Activated B cell treated with CpG ODN at 0.5 μM for 24 hours (primary cell): ENCODE measurements at regions of chr14 and their contacts with region 1.

Region 1: GRCh38 chr14:23095196-23096108 is at the start of gene C14orf119:
- DNase-seq: peak; percentile 77
- ATAC-seq: peak; percentile 87
- H3K4me3 Mint-ChIP-seq: no peak within 1 kb of the TSS
- H3K27ac Mint-ChIP-seq: no peak within 1 kb of the TSS
- H3K4me1 Mint-ChIP-seq: peaks cover 34% of the 10 kb centered on the region
- H3K27me3 Mint-ChIP-seq: no peaks in the 10 kb centered on the region
- CTCF ChIP-seq: no peak
- total RNA-seq, gene C14orf119: 35.3 and 36.0 TPM in 2 replicates

Region 2: DNA sequence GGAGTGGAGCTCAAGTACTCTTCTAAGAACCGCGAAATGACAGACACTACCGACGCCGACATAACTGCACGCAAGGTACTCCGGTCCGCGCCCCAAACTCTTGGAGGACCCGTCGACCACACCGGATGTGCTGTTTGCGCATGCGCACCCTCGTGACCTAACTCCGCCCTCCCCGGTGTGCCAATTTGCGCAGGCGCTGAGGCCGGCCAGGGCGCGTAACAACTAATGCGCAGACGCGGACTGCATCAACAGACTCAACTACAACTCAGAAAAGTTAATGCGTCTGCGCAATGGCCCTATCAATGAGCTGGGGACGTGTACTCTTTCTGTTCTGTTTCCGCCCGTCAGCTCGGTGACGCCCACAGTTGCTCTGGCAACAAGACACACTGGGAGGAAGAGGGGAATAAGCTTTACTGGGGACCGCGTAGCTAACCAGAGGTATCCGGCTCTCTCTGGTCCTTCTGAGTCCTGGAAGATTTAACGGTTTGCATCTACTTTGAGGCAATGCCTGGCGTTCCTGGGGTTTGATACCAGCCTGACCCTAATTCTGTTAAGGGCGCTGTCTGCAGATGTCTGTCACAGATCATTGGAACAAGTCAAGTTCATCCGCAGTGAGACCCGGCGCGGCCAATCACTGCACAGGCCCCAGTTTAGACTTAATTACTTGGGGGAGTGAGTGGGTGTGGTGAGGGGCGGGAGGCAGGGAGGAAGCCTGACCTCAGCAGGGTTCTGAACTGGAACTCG is 506.2 kb before region 1 on chr14 and contains the start of gene DAD1:
- CTCF ChIA-PET with region 1: no interaction called
- POLR2A ChIA-PET with region 1: interaction called, 10 read pairs
- intact Hi-C with region 1: loop called (anchors 1 kb)
- DNase-seq: peak; percentile 99
- ATAC-seq: peak; percentile 88
- H3K4me3 Mint-ChIP-seq: peak within 1 kb of the TSS; percentile 99
- H3K27ac Mint-ChIP-seq: peak within 1 kb of the TSS; percentile 100
- H3K4me1 Mint-ChIP-seq: peaks cover 57% of the 10 kb centered on the region
- H3K27me3 Mint-ChIP-seq: peaks cover 2% of the 10 kb centered on the region
- CTCF ChIP-seq: no peak
- total RNA-seq, gene DAD1: 123 and 139 TPM in 2 replicates

Region 3: GRCh38 chr14:23034483-23035302 is 60.8 kb before region 1 on chr14 and contains the start of gene PSMB5:
- CTCF ChIA-PET with region 1: no interaction called
- POLR2A ChIA-PET with region 1: interaction called, 4 read pairs
- intact Hi-C with region 1: loop called (anchors 1 kb)
- DNase-seq: peak; percentile 67
- ATAC-seq: peak; percentile 93
- H3K4me3 Mint-ChIP-seq: peak within 1 kb of the TSS; percentile 84
- H3K27ac Mint-ChIP-seq: peak within 1 kb of the TSS; percentile 96
- H3K4me1 Mint-ChIP-seq: peaks cover 29% of the 10 kb centered on the region
- H3K27me3 Mint-ChIP-seq: no peaks in the 10 kb centered on the region
- CTCF ChIP-seq: no peak
- total RNA-seq, gene PSMB5: 53.3 and 67.5 TPM in 2 replicates

Region 4: GRCh38 chr14:23076785-23077408 is 18.6 kb before region 1 on chr14:
- CTCF ChIA-PET with region 1: interaction called, 24 read pairs
- POLR2A ChIA-PET with region 1: interaction called, 36 read pairs
- intact Hi-C with region 1: no loop called
- DNase-seq: no peak
- ATAC-seq: peak; percentile 67
- H3K4me3 Mint-ChIP-seq: no peak overlapping the region
- H3K27ac Mint-ChIP-seq: no peak overlapping the region
- H3K4me1 Mint-ChIP-seq: peaks cover 7% of the 10 kb centered on the region
- H3K27me3 Mint-ChIP-seq: no peaks in the 10 kb centered on the region
- CTCF ChIP-seq: no peak

Region 5: DNA sequence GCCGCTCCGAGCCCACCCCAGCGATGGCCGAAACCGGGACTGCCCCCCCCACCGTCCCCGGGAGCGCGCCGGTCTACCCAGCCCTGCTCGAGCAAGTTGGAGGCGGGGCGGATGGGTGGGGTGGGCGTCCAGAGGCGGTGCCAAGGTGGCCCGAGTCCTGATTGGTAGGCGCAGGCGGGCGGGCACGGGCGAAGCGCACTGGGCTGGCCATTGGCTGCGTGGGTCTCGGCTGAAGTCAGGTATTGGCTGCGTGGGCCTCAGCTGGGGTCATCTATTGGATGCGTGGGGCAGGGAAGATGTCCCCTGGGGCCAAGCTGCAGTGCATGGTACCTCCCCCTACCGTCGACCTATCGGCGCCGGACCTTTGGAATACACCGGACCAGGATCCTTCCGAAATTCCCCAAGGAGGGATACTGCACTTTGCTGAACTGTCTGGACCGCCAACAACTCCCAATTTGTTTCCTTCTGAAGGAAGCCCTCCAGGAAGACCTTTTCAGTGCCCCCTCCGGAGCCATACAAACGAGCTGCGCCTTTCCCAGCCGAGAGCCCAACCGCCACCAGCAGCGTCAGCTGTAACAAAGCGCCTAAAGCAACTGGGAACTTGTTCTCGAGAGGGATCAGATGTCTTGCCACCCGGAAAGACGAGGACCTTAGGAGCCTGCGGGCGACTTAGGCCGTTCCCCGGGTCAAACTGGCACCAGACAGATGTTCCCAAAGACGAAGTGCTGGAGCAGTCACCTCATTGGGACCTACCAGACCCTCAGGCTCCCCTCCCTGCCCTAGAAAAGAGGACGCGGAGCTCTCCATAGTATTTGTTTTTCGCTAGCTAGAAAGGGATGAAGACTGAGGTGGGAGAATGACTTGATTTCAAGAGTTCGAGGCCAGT is 190.8 kb after region 1 on chr14 and contains the start of gene HOMEZ:
- CTCF ChIA-PET with region 1: no interaction called
- POLR2A ChIA-PET with region 1: interaction called, 13 read pairs
- intact Hi-C with region 1: no loop called
- DNase-seq: peak; percentile 97
- ATAC-seq: peak; percentile 97
- H3K4me3 Mint-ChIP-seq: peak within 1 kb of the TSS; percentile 96
- H3K27ac Mint-ChIP-seq: peak within 1 kb of the TSS; percentile 90
- H3K4me1 Mint-ChIP-seq: peaks cover 18% of the 10 kb centered on the region
- H3K27me3 Mint-ChIP-seq: no peaks in the 10 kb centered on the region
- CTCF ChIP-seq: no peak
- total RNA-seq, gene HOMEZ: 10.8 and 11.5 TPM in 2 replicates

Region 6: DNA sequence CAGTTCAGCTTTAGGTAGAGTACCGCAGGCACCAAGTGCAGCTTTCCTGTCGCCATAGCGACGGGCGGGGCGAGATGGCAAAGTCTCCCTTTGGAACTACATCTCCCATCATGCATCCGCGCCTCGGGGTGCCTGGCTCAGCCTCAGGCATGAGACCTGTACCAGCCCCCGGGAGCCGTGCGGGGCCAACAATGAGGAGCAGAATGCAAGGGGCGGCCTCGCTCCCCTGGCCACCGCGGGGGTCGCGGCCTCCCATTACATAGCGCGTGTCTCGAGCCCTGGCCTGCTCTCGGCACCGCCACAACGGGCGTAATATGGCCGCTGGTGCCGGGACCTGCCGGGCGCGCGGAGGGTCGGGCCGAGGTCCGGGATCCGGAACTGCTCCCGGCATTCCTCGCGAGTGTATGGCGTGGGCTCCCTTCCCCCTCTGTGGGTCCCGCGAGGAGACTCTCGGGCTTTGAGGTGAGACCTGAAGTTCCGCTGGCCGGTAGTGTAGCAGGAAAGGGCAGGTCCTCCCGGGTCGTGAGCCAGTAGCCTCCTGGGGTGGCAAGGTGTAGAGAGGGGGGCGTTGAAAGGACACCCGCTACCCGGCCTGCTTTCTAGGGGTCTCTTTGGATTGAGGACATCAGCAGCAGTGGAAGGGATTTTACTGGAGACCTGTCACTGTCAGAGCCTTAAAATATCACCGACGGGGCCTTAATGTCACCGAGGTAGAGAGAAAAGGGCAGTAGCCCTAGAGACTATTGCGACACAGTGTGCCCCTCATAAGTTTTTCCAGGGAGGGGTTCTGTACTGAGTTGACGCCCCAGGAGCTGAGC is 460.6 kb after region 1 on chr14 and contains the start of gene THTPA:
- CTCF ChIA-PET with region 1: no interaction called
- POLR2A ChIA-PET with region 1: interaction called, 3 read pairs
- intact Hi-C with region 1: loop called (anchors 10 kb)
- DNase-seq: peak; percentile 88
- ATAC-seq: peak; percentile 79
- H3K4me3 Mint-ChIP-seq: peak within 1 kb of the TSS; percentile 94
- H3K27ac Mint-ChIP-seq: peak within 1 kb of the TSS; percentile 95
- H3K4me1 Mint-ChIP-seq: peaks cover 30% of the 10 kb centered on the region
- H3K27me3 Mint-ChIP-seq: no peaks in the 10 kb centered on the region
- CTCF ChIP-seq: no peak
- total RNA-seq, gene THTPA: 18.0 and 18.6 TPM in 2 replicates